B cell (primary cell): ENCODE measurements at regions of chr6 and their contacts with region 1.

Region 1: DNA sequence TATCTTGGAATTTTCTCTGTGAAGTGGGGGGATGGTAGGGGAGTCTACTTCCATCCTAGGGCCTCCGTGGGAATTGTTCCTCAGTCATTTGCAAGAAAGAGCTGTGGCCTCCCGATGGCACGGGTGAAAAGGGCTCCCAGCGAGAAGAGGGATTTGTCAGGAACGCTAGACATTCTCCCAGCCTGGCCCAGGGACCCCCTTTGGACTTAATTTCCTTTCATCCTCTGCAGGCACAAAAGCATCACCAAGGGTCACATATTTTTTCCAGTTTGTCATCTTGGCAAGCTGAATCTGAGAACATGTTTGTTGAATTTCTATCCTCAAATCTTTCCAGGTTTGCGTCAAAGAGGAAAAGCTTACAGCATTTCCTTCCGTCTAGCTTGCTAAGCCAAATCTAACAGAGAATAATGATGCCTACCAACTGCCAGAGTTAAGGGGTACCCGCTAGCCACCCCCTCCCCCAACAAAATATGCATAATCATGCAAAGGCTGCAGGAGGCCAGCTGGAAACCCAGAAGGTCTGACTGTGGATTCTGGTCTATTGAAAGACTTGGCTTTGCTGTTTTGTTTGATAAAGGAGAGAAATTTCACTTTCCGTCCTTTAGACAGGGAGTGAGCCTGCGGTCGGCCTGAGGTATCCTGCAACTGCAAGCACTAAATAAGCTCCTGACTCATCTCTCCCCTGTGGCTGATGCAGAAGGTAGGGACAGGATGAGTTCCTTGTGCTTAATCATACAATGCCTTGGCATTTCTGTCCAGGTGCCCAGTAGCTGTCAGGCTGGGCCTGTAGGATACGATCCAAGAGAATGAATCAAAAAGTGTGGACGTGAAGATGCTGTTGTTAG is 23.1 kb downstream of the PSMG4 start:
- DNase-seq: no peak
- ATAC-seq: no peak
- H3K4me3 ChIP-seq: no peak overlapping the region
- H3K4me3 Mint-ChIP-seq: no peak overlapping the region
- H3K27ac ChIP-seq: no peak overlapping the region
- H3K27ac Mint-ChIP-seq: no peak overlapping the region
- H3K4me1 ChIP-seq: peaks cover 0 to 3% of the 10 kb centered on the region in 2 donors
- H3K4me1 Mint-ChIP-seq: peaks cover 2% of the 10 kb centered on the region
- H3K27me3 ChIP-seq: no peaks in the 10 kb centered on the region
- H3K27me3 Mint-ChIP-seq: no peaks in the 10 kb centered on the region
- CTCF ChIP-seq: no peak

Region 2: DNA sequence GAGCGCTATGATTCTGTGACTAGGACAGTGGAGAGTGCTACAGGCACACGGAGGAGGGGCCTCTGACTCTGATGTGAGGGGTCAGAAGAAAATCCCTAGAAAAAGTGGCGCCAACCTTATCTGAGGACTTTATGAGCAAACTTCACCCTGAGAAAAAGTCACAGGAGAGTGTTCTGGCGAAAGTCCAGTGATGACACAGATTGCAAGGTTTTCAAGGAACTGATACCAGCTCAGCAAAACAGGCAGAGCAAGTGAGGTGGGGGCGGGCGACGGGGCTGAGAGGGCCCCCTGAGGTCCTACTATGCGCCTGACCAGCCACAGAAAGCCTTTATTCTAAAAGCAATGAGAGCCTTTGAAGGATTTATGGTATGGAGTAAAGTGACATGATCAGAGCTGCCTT is 101.7 kb after region 1 on chr6:
- CTCF ChIA-PET with region 1: no interaction called
- POLR2A ChIA-PET with region 1: no interaction called
- intact Hi-C with region 1: no loop called
- DNase-seq: no peak
- ATAC-seq: no peak
- H3K4me3 ChIP-seq: no peak overlapping the region
- H3K4me3 Mint-ChIP-seq: no peak overlapping the region
- H3K27ac ChIP-seq: no peak overlapping the region
- H3K27ac Mint-ChIP-seq: no peak overlapping the region
- H3K4me1 ChIP-seq: peaks cover 14 to 17% of the 10 kb centered on the region in 2 donors
- H3K4me1 Mint-ChIP-seq: peaks cover 26% of the 10 kb centered on the region
- H3K27me3 ChIP-seq: peaks cover 0 to 6% (median 0%) of the 10 kb centered on the region in 4 experiments
- H3K27me3 Mint-ChIP-seq: peaks cover 26% of the 10 kb centered on the region
- CTCF ChIP-seq: no peak

Region 3: GRCh38 chr6:3410385-3411360 is 128.8 kb after region 1 on chr6:
- CTCF ChIA-PET with region 1: interaction called, 4 read pairs
- POLR2A ChIA-PET with region 1: no interaction called
- intact Hi-C with region 1: loop called (anchors 5 kb)
- DNase-seq: peak; percentile 61
- ATAC-seq: no peak
- H3K4me3 ChIP-seq: no peak overlapping the region
- H3K4me3 Mint-ChIP-seq: no peak overlapping the region
- H3K27ac ChIP-seq: no peak overlapping the region
- H3K27ac Mint-ChIP-seq: no peak overlapping the region
- H3K4me1 ChIP-seq: peaks cover 0 to 5% of the 10 kb centered on the region in 2 donors
- H3K4me1 Mint-ChIP-seq: peaks cover 6% of the 10 kb centered on the region
- H3K27me3 ChIP-seq: no peaks in the 10 kb centered on the region
- H3K27me3 Mint-ChIP-seq: peaks cover 8% of the 10 kb centered on the region
- CTCF ChIP-seq: peak; percentile 65

Region 4: GRCh38 chr6:3511926-3512325 is 230.1 kb after region 1 on chr6:
- CTCF ChIA-PET with region 1: interaction called, 5 read pairs
- POLR2A ChIA-PET with region 1: no interaction called
- intact Hi-C with region 1: loop called (anchors 1 kb)
- DNase-seq: no peak
- ATAC-seq: no peak
- H3K4me3 ChIP-seq: no peak overlapping the region
- H3K4me3 Mint-ChIP-seq: no peak overlapping the region
- H3K27ac ChIP-seq: no peak overlapping the region
- H3K27ac Mint-ChIP-seq: no peak overlapping the region
- H3K4me1 ChIP-seq: no peaks in the 10 kb centered on the region
- H3K4me1 Mint-ChIP-seq: no peaks in the 10 kb centered on the region
- H3K27me3 ChIP-seq: peaks cover 0 to 6% (median 2%) of the 10 kb centered on the region in 4 experiments
- H3K27me3 Mint-ChIP-seq: peaks cover 33% of the 10 kb centered on the region
- CTCF ChIP-seq: no peak

Region 5: GRCh38 chr6:3929281-3929798 is 647.5 kb after region 1 on chr6:
- CTCF ChIA-PET with region 1: no interaction called
- POLR2A ChIA-PET with region 1: no interaction called
- intact Hi-C with region 1: loop called (anchors 5 kb)
- DNase-seq: no peak
- ATAC-seq: no peak
- H3K4me3 ChIP-seq: no peak overlapping the region
- H3K4me3 Mint-ChIP-seq: no peak overlapping the region
- H3K27ac ChIP-seq: no peak overlapping the region
- H3K27ac Mint-ChIP-seq: no peak overlapping the region
- H3K4me1 ChIP-seq: no peaks in the 10 kb centered on the region
- H3K4me1 Mint-ChIP-seq: no peaks in the 10 kb centered on the region
- H3K27me3 ChIP-seq: no peaks in the 10 kb centered on the region
- H3K27me3 Mint-ChIP-seq: peaks cover 7% of the 10 kb centered on the region
- CTCF ChIP-seq: no peak

Region 6: GRCh38 chr6:3990692-3991501 is 709.0 kb after region 1 on chr6:
- CTCF ChIA-PET with region 1: interaction called, 5 read pairs
- POLR2A ChIA-PET with region 1: no interaction called
- intact Hi-C with region 1: loop called (anchors 1 kb)
- DNase-seq: peak; percentile 72
- ATAC-seq: peak; percentile 85
- H3K4me3 ChIP-seq: no peak overlapping the region
- H3K4me3 Mint-ChIP-seq: no peak overlapping the region
- H3K27ac ChIP-seq: no peak overlapping the region
- H3K27ac Mint-ChIP-seq: no peak overlapping the region
- H3K4me1 ChIP-seq: peaks cover 0 to 5% of the 10 kb centered on the region in 2 donors
- H3K4me1 Mint-ChIP-seq: peaks cover 5% of the 10 kb centered on the region
- H3K27me3 ChIP-seq: no peaks in the 10 kb centered on the region
- H3K27me3 Mint-ChIP-seq: no peaks in the 10 kb centered on the region
- CTCF ChIP-seq: peak; percentile 81